Right cardiac atrium (tissue), 5 donors: ENCODE measurements at regions of chr15 and their contacts with region 1.

Region 1: GRCh38 chr15:65192016-65192415 is 6.9 kb upstream of the CLPX start:
- DNase-seq: no peak
- ATAC-seq: peak in 1 of 2 donors; percentile 34
- H3K4me3 ChIP-seq: no peak overlapping the region
- H3K27ac ChIP-seq: no peak overlapping the region
- H3K4me1 ChIP-seq: no peaks in the 10 kb centered on the region
- H3K27me3 ChIP-seq: no peaks in the 10 kb centered on the region

Region 2: GRCh38 chr15:65217526-65218482 is 25.8 kb after region 1 on chr15:
- intact Hi-C with region 1: no loop called
- DNase-seq: no peak
- ATAC-seq: no peak
- H3K4me3 ChIP-seq: no peak overlapping the region
- H3K27ac ChIP-seq: no peak overlapping the region
- H3K4me1 ChIP-seq: no peaks in the 10 kb centered on the region
- H3K27me3 ChIP-seq: no peaks in the 10 kb centered on the region

Region 3: GRCh38 chr15:65275728-65276126 is 83.7 kb after region 1 on chr15:
- intact Hi-C with region 1: loop called in 3 of 4 experiments (anchors 5 to 10 kb)
- DNase-seq: no peak
- ATAC-seq: peak in 1 of 2 donors; percentile 49
- H3K4me3 ChIP-seq: no peak overlapping the region
- H3K27ac ChIP-seq: no peak overlapping the region
- H3K4me1 ChIP-seq: peaks cover 6% of the 10 kb centered on the region
- H3K27me3 ChIP-seq: no peaks in the 10 kb centered on the region